ENCODE measurements at regions of chr15 and their contacts with region 1.

Region 1: DNA sequence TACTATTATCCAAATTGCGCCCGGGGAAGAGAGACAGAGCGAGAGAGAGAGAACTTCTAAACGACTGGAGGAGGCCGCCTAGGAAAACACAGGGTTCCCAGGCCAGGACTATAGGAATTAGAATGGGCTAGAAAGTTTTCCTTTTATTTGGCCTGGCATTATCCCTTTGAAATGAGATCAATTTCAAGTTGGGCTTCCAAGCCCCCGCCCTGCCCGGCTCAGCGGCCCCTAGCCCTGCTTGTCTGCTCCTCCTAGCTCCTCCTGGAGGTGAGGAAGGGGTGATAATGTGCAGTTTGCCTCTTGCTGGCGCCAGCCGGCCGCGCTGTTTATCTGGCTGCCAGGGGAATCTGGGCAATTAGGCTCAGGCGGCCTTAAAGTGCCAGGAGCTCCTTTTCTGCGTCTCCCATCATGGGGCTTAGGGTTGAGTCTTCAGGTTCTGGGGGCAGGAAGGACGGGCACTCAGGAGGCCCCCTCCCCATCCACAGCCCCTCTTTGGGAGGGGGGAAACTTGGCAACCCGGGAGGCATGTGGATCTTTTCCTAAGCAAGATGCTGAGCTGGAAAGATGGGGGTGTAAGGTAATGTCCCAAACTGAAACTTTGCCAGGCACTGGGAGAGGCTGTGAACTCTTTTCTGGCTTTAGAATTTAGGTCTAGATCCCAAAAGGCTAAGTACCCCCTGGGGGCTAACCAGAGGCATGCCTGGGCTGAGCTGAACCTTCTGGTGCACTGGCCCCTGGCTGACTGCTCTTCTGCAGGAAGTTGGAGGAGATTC is 5.5 kb downstream of the SMAD6 start:
- DNase-seq: peak; percentile 90
- H3K4me3 ChIP-seq: peak overlapping the region; percentile 3 to 40; a peak in 2 of 4 replicates
- H3K27ac ChIP-seq: peak overlapping the region; percentile 62 to 74; a peak in 3 of 4 replicates
- H3K4me1 ChIP-seq: peaks cover 29 to 32% of the 10 kb centered on the region in 2 experiments; a peak in 3 of 4 replicates
- H3K27me3 ChIP-seq: no peaks in the 10 kb centered on the region
- CTCF ChIP-seq: peak; percentile 41; the same call in 1 of the 2 replicates
- EP300 ChIP-seq: peak; percentile 27 to 57; a peak in 2 of 4 replicates
- RAD21 ChIP-seq: peak; percentile 61

Region 2: DNA sequence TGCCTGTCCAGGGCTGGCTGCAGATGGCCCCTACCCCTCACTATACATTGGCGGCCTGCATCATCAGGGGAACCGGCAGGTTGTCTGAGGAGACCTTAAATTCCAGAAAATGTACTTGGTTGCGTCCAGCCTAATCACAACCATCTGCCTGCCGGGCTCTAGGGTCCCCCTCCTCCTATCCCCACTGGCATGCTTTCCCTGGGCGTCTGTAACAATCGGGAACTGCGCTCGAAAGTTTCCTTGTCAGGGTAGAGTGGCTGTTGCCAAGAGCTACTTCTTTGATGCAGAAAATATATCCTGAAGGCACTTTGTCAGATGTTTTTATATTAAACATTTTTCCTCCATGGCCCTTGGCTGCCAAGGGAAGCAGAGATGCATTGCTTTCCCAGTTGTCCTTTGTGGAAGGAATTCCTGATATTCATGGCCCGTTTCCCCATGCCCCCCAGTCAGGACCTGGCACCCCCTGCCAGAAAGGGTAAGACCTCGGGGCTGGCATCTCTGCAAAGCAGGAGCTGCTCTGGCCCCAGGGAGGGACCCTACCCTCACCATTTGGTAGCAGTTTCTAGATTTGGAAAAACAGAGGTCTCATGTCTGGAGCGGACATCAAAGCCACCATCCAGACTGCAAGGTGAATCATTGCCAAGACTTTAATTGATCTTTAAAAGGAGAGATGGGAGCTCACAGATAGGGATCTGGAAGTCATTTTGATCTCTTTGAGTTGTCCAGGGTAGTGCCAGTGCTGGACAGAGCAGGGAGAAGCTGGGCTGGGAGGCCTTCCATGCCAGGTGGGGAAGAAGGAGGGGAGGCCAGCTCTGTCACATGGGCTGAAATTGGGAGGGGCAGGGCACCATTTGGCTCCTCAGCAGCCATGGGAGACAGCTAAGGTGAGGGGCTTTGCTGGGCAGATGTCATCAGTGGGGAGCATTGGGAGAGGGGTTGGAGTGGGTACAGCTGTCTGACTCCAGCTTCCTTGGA is 17.6 kb after region 1 on chr15:
- CTCF ChIA-PET with region 1: interaction called, 13 read pairs
- POLR2A ChIA-PET with region 1: no interaction called
- DNase-seq: peak; percentile 64
- H3K4me3 ChIP-seq: no peak overlapping the region
- H3K27ac ChIP-seq: peak overlapping the region; percentile 63 to 72
- H3K4me1 ChIP-seq: peaks cover 9 to 19% of the 10 kb centered on the region in 2 experiments; a peak in 3 of 4 replicates
- H3K27me3 ChIP-seq: no peaks in the 10 kb centered on the region
- CTCF ChIP-seq: no peak
- EP300 ChIP-seq: no peak
- RAD21 ChIP-seq: no peak

Region 3: GRCh38 chr15:66735909-66736305 is 28.4 kb after region 1 on chr15:
- CTCF ChIA-PET with region 1: interaction called, 10 read pairs
- POLR2A ChIA-PET with region 1: no interaction called
- DNase-seq: no peak
- H3K4me3 ChIP-seq: no peak overlapping the region
- H3K27ac ChIP-seq: no peak overlapping the region
- H3K4me1 ChIP-seq: peaks cover 0 to 13% of the 10 kb centered on the region in 2 experiments; a peak in 1 of 4 replicates
- H3K27me3 ChIP-seq: no peaks in the 10 kb centered on the region
- CTCF ChIP-seq: no peak
- EP300 ChIP-seq: no peak
- RAD21 ChIP-seq: no peak